Endothelial cell of umbilical vein (primary cell): ENCODE measurements at regions of chr7 and their contacts with region 1.

Region 1: DNA sequence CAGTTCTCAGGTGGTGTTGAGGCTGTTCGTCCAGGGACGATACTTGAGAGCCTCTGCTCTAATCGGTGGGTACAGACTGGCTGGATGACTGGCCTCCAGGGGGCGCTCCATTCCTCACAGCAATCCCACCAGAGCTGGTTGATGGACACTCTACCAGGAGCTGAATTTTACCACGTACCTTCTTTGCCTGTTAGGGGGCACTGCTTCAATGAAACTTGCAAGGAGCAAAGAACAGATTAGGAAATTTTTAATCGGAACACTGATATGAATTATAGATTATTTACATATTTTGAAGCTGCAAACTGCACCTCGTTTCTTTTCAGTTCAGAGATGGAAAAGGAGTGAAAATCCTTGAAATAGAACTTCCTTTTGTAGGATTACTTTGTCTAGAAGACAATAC is 44.9 kb downstream of the KBTBD2 start:
- DNase-seq: peak; percentile 79
- H3K4me3 ChIP-seq: no peak overlapping the region
- H3K27ac ChIP-seq: no peak overlapping the region
- H3K4me1 ChIP-seq: no peaks in the 10 kb centered on the region
- H3K27me3 ChIP-seq: no peaks in the 10 kb centered on the region
- CTCF ChIP-seq: peak; percentile 73 to 88
- POLR2A ChIP-seq: no peak

Region 2: GRCh38 chr7:31100445-31100844 is 1746.3 kb before region 1 on chr7:
- CTCF ChIA-PET with region 1: no interaction called
- POLR2A ChIA-PET with region 1: no interaction called
- dilution Hi-C with region 1: no loop called
- intact Hi-C with region 1: no loop called
- DNase-seq: no peak
- H3K4me3 ChIP-seq: no peak overlapping the region
- H3K27ac ChIP-seq: no peak overlapping the region
- H3K4me1 ChIP-seq: no peaks in the 10 kb centered on the region
- H3K27me3 ChIP-seq: no peaks in the 10 kb centered on the region
- CTCF ChIP-seq: no peak
- POLR2A ChIP-seq: no peak

Region 3: DNA sequence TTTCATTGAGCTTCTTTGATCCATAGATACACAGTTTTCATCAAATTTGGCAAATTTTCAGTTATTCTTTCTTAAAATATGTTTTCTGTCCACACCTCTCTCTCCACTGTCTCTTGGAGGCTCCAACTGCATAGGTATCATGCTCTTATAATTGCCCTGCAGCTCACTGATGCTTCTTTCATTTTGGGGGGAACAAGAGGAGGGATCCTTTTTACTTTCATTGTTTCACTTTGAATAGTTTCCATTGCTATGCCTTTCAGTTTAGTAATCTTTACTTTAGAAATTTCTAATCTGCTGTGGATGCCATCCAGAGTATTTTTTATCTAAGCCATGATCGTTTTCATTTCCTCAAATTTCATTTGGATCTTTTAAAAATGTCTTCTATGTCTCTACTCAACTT is 11.9 kb after region 1 on chr7:
- CTCF ChIA-PET with region 1: interaction called, 28 read pairs
- POLR2A ChIA-PET with region 1: no interaction called
- dilution Hi-C with region 1: no loop called
- intact Hi-C with region 1: no loop called
- DNase-seq: no peak
- H3K4me3 ChIP-seq: no peak overlapping the region
- H3K27ac ChIP-seq: no peak overlapping the region
- H3K4me1 ChIP-seq: no peaks in the 10 kb centered on the region
- H3K27me3 ChIP-seq: peaks cover 0 to 3% of the 10 kb centered on the region in 2 experiments
- CTCF ChIP-seq: no peak
- POLR2A ChIP-seq: no peak

Region 4: DNA sequence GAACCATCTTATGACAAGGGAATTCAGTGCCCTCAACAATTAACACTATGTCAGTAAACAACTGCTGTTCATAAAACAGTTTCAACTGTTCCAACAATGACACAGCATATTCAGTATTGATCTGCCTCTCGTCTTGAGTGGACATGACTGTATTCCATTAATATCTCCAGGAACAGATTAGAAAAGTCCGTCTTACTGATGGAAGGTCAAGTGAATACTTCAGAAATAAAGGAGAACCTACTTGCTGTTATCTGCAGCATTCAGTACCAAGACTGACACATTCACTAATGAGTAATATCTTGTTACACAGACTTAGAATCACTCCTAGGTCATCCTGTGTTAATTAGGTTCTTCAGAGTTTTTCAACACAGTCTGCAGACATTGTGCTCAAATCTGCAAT is 32.8 kb after region 1 on chr7:
- CTCF ChIA-PET with region 1: interaction called, 19 read pairs
- POLR2A ChIA-PET with region 1: no interaction called
- dilution Hi-C with region 1: no loop called
- intact Hi-C with region 1: no loop called
- DNase-seq: peak; percentile 59
- H3K4me3 ChIP-seq: no peak overlapping the region
- H3K27ac ChIP-seq: no peak overlapping the region
- H3K4me1 ChIP-seq: peaks cover 23% of the 10 kb centered on the region
- H3K27me3 ChIP-seq: no peaks in the 10 kb centered on the region
- CTCF ChIP-seq: no peak
- POLR2A ChIP-seq: no peak

Region 5: GRCh38 chr7:32905175-32905662 is 58.5 kb after region 1 on chr7:
- CTCF ChIA-PET with region 1: interaction called, 26 read pairs
- POLR2A ChIA-PET with region 1: no interaction called
- dilution Hi-C with region 1: no loop called
- intact Hi-C with region 1: no loop called
- DNase-seq: peak; percentile 86
- H3K4me3 ChIP-seq: peak overlapping the region in 2 of 3 experiments; percentile 2 to 31
- H3K27ac ChIP-seq: peak overlapping the region; percentile 23
- H3K4me1 ChIP-seq: peaks cover 3% of the 10 kb centered on the region
- H3K27me3 ChIP-seq: no peaks in the 10 kb centered on the region
- CTCF ChIP-seq: no peak
- POLR2A ChIP-seq: no peak

Region 6: DNA sequence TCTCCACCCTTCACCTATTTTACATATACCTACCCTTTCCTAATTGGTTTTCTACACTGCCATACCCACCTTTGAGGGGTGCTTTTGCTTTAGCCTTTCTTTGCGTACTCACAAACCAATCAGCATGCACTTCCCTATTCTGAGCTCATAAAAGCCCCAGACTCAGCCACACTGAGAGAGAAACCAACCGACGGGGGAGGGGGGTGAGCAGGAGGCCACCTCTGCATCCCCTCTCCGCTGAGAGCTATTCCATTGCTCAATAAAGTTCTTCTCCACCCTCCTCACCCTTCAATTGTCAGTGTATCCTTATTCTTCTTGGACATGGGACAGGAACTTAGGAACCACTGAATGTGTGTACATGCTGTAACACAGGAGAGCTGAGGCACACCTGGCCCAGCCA is 101.5 kb after region 1 on chr7:
- CTCF ChIA-PET with region 1: interaction called, 31 read pairs
- POLR2A ChIA-PET with region 1: no interaction called
- dilution Hi-C with region 1: no loop called
- intact Hi-C with region 1: loop called (anchors 1 kb)
- DNase-seq: no peak
- H3K4me3 ChIP-seq: no peak overlapping the region
- H3K27ac ChIP-seq: no peak overlapping the region
- H3K4me1 ChIP-seq: no peaks in the 10 kb centered on the region
- H3K27me3 ChIP-seq: no peaks in the 10 kb centered on the region
- CTCF ChIP-seq: no peak
- POLR2A ChIP-seq: no peak

Region 7: GRCh38 chr7:33050535-33051318 is 204.0 kb after region 1 on chr7:
- CTCF ChIA-PET with region 1: interaction called, 10 read pairs
- POLR2A ChIA-PET with region 1: no interaction called
- dilution Hi-C with region 1: no loop called
- intact Hi-C with region 1: loop called (anchors 1 kb)
- DNase-seq: peak; percentile 84
- H3K4me3 ChIP-seq: no peak overlapping the region
- H3K27ac ChIP-seq: no peak overlapping the region
- H3K4me1 ChIP-seq: peaks cover 11% of the 10 kb centered on the region
- H3K27me3 ChIP-seq: no peaks in the 10 kb centered on the region
- CTCF ChIP-seq: peak; percentile 41 to 52
- POLR2A ChIP-seq: no peak

Region 8: DNA sequence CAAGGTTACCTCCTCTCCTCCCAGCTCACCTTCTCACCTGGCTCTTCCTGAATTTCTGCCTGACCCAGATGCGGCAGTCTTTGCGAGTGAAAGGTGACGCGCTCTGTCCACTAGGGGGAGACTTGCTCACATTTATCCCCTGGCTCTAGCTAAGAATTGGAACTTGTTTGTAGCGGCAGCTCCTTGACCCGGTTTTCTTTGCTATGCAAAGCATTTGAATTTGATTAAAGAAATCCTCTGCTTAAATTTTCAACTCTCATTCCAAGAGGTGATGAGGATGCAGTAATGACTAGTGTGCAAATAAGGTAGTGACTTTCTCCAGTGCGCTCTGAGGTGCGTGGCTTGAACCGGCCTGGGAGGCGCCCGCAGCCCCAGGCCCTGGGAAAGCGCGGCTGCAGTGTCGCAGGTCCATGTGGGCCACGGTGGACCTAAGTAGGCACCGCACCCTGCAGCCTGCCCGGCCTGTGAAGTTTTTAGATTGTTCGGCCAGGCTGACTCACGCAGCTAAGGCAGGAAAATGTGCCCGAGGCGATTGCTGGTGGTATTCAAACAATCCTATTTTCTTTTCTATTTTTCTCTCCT is 1474.4 kb after region 1 on chr7:
- CTCF ChIA-PET with region 1: no interaction called
- POLR2A ChIA-PET with region 1: no interaction called
- dilution Hi-C with region 1: no loop called
- intact Hi-C with region 1: no loop called
- DNase-seq: peak; percentile 79
- H3K4me3 ChIP-seq: peak overlapping the region in 2 of 3 experiments; percentile 2
- H3K27ac ChIP-seq: no peak overlapping the region
- H3K4me1 ChIP-seq: peaks cover 3% of the 10 kb centered on the region
- H3K27me3 ChIP-seq: no peaks in the 10 kb centered on the region
- CTCF ChIP-seq: peak; percentile 86 to 87
- POLR2A ChIP-seq: no peak